ENCODE measurements at regions of chr12 and their contacts with region 1.

Region 1: GRCh38 chr12:50025187-50026059 is at the start of gene RACGAP1:
- DNase-seq: peak; percentile 99
- ATAC-seq: peak; percentile 97
- H3K4me3 ChIP-seq: peak within 1 kb of the TSS; percentile 44 to 75 (median 65)
- H3K4me3 Mint-ChIP-seq: peak within 1 kb of the TSS; percentile 94
- H3K27ac ChIP-seq: peak within 1 kb of the TSS; percentile 52 to 63
- H3K27ac Mint-ChIP-seq: peak within 1 kb of the TSS; percentile 85
- H3K4me1 ChIP-seq: peaks cover 8 to 10% of the 10 kb centered on the region in 2 donors
- H3K4me1 Mint-ChIP-seq: peaks cover 17% of the 10 kb centered on the region
- H3K27me3 ChIP-seq: no peaks in the 10 kb centered on the region
- H3K27me3 Mint-ChIP-seq: no peaks in the 10 kb centered on the region
- CTCF ChIP-seq: no peak
- total RNA-seq, gene RACGAP1: 11.3 and 14.2 TPM in 2 replicates

Region 2: DNA sequence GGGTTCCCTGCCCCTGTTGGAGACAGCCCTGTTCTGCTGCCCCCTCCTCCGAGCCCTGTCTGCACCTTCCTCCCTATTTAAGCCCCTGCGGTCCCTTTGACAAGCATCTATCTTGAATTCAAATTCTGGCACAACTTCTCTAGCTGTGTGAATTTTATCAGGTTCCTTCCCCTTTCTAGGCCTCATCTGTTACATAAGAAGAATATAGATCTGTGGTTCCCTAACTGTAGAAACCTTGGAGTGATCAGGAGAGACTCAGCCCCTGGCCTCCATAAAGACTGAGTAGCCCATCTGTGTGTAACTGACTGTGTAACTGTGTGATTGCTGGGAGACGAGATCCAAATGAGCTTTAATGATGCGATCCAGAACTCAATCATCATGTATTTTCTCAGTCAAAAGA is 12.9 kb after region 1 on chr12:
- CTCF ChIA-PET with region 1: interaction called, 17 read pairs
- POLR2A ChIA-PET with region 1: no interaction called
- intact Hi-C with region 1: no loop called
- DNase-seq: no peak
- ATAC-seq: no peak
- H3K4me3 ChIP-seq: no peak overlapping the region
- H3K4me3 Mint-ChIP-seq: no peak overlapping the region
- H3K27ac ChIP-seq: no peak overlapping the region
- H3K27ac Mint-ChIP-seq: no peak overlapping the region
- H3K4me1 ChIP-seq: peaks cover 7% of the 10 kb centered on the region in 2 donors
- H3K4me1 Mint-ChIP-seq: peaks cover 2% of the 10 kb centered on the region
- H3K27me3 ChIP-seq: peaks cover 0 to 3% (median 0%) of the 10 kb centered on the region in 4 experiments
- H3K27me3 Mint-ChIP-seq: peaks cover 10% of the 10 kb centered on the region
- CTCF ChIP-seq: no peak

Region 3: GRCh38 chr12:50326636-50327284 is 301.3 kb after region 1 on chr12:
- CTCF ChIA-PET with region 1: no interaction called
- POLR2A ChIA-PET with region 1: no interaction called
- intact Hi-C with region 1: no loop called
- DNase-seq: no peak
- ATAC-seq: no peak
- H3K4me3 ChIP-seq: no peak overlapping the region
- H3K4me3 Mint-ChIP-seq: no peak overlapping the region
- H3K27ac ChIP-seq: no peak overlapping the region
- H3K27ac Mint-ChIP-seq: no peak overlapping the region
- H3K4me1 ChIP-seq: no peaks in the 10 kb centered on the region
- H3K4me1 Mint-ChIP-seq: no peaks in the 10 kb centered on the region
- H3K27me3 ChIP-seq: no peaks in the 10 kb centered on the region
- H3K27me3 Mint-ChIP-seq: no peaks in the 10 kb centered on the region
- CTCF ChIP-seq: no peak